ENCODE measurements at regions of chr2 and their contacts with region 1.

Region 1: GRCh38 chr2:150410809-150411208 is 76.7 kb downstream of the RND3 start:
- DNase-seq: peak; percentile 35
- ATAC-seq: peak; percentile 91
- H3K4me3 ChIP-seq: no peak overlapping the region
- H3K27ac ChIP-seq: no peak overlapping the region
- H3K4me1 ChIP-seq: no peaks in the 10 kb centered on the region
- H3K27me3 ChIP-seq: no peaks in the 10 kb centered on the region
- CTCF ChIP-seq: no peak
- EP300 ChIP-seq: no peak
- POLR2A ChIP-seq: no peak
- RAD21 ChIP-seq: no peak

Region 2: DNA sequence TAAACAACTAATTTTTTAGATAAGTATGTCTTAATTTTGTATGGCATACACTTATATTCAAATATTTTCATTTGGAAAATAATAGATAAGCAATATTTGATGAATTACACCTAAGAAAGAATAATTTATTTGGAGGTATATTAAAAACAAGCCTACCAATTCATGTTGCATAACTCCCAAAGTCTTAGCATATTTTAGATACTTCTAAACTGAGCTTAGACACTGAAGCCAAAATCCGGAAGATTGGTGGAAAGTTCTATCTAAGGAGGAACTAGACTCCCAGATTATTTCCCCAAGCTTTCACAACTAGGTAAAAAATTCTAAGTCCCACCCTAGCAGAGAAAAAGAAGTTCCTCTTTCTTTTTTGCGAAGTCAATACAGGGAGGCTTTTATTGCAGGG is 602.3 kb before region 1 on chr2:
- CTCF ChIA-PET with region 1: no interaction called
- POLR2A ChIA-PET with region 1: no interaction called
- in situ Hi-C with region 1: no loop called
- intact Hi-C with region 1: no loop called
- DNase-seq: no peak
- ATAC-seq: no peak
- H3K4me3 ChIP-seq: no peak overlapping the region
- H3K27ac ChIP-seq: no peak overlapping the region
- H3K4me1 ChIP-seq: no peaks in the 10 kb centered on the region
- H3K27me3 ChIP-seq: no peaks in the 10 kb centered on the region
- CTCF ChIP-seq: no peak
- EP300 ChIP-seq: no peak
- POLR2A ChIP-seq: no peak
- RAD21 ChIP-seq: no peak

Region 3: DNA sequence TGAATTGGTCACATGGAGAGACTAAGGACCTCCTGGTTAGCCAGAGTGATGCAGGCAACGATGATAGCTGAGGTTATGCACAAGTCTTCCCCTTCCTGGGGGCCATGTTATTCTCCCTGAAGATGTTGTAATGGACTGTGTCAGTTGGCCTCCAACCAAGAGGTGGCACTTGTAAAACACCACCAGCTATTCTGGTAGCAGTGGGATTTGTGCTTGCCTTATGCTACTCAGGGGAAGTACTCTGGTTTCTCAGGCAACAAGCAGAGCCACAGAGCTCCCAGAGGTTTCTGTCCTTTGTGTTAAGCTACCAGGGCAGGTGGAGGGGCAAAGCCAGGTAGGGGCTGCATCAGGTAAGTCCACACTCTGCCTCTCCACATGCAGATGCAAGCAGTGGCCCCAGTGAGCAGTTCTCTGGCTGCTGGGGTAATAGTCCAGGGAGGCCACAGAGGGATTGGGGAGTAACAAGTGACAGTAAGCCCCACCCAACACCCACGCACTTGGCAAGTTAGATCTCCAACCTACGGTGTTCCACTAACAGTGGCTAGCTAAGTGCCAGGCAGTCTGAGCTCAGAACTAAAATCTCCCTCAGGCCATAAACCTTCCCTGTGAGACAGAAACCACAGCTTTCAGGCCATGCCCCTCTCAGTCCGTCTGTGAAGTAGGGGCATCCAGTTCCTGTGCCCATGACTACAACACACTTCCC is 23.1 kb before region 1 on chr2:
- CTCF ChIA-PET with region 1: no interaction called
- POLR2A ChIA-PET with region 1: no interaction called
- in situ Hi-C with region 1: no loop called
- intact Hi-C with region 1: loop called (anchors 1 kb)
- DNase-seq: no peak
- ATAC-seq: no peak
- H3K4me3 ChIP-seq: no peak overlapping the region
- H3K27ac ChIP-seq: no peak overlapping the region
- H3K4me1 ChIP-seq: no peaks in the 10 kb centered on the region
- H3K27me3 ChIP-seq: no peaks in the 10 kb centered on the region
- CTCF ChIP-seq: no peak
- EP300 ChIP-seq: no peak
- POLR2A ChIP-seq: no peak
- RAD21 ChIP-seq: no peak

Measured in HepG2 (cell line).